ENCODE measurements at regions of chr2 and their contacts with region 1.

Region 1: DNA sequence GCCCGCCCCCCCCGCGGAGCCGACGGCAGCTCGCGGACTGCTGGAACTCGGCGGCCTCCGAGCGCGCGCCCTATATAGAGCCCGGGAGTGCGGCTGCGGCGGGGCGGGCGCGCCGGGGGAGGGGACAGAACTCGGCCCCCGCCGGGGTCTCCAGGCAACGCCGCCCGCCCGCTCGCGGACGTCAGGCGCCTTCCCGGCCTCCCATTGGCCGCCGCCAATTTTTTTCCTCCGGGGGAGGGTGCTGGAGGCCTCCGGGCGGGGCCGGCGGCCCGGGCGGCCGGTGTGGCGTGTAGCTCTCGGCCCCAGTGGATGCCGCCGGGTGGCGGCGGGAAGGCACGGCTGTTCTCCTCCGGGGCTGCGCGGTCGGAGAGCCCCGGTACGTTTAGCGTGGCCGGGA is at the start of gene ZFP36L2:
- DNase-seq: peak; percentile 86 to 98 (median 96)

Region 2: DNA sequence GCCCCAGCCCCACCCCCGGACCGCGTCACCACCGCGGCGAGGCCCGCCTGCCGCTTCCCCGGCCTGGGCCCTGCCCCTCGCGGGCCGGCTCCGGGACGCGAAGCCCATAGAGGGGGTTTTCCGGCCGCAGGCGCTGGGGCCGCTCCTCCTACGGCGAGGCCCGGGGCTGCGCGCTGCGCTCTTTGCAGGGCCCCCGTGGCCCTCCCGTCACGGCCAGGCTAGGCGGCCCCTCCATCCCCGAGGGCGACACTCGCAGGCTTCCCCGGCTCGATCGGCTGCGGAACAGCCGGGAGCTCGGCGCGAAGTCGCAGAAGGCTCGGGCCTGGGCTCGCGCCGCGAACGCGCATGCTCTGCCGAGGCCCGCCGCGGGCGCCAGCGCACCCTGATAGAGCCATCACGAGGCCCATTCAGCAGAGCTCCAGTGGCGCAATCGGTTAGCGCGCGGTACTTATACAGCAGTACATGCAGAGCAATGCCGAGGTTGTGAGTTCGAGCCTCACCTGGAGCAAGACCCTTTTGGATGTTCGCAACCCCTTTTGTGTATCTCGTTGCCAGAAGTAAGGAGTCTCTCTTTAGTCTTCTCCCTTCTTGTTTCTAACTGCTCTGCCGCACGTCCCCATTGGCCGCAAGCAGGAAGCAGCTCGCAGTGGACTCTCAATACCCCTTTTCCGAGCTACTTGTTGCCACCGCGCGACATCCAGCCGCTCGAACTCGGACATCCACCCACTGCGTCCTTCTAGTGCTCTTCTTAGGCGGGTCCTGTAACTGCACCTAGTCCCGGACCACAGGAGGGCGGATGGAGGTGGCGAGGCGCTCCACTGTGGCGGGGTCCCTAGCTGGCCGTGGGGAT is 416.2 kb before region 1 on chr2:
- intact Hi-C with region 1: loop called (anchors 5 kb)
- DNase-seq: peak; percentile 87 to 98 (median 94)

Region 3: DNA sequence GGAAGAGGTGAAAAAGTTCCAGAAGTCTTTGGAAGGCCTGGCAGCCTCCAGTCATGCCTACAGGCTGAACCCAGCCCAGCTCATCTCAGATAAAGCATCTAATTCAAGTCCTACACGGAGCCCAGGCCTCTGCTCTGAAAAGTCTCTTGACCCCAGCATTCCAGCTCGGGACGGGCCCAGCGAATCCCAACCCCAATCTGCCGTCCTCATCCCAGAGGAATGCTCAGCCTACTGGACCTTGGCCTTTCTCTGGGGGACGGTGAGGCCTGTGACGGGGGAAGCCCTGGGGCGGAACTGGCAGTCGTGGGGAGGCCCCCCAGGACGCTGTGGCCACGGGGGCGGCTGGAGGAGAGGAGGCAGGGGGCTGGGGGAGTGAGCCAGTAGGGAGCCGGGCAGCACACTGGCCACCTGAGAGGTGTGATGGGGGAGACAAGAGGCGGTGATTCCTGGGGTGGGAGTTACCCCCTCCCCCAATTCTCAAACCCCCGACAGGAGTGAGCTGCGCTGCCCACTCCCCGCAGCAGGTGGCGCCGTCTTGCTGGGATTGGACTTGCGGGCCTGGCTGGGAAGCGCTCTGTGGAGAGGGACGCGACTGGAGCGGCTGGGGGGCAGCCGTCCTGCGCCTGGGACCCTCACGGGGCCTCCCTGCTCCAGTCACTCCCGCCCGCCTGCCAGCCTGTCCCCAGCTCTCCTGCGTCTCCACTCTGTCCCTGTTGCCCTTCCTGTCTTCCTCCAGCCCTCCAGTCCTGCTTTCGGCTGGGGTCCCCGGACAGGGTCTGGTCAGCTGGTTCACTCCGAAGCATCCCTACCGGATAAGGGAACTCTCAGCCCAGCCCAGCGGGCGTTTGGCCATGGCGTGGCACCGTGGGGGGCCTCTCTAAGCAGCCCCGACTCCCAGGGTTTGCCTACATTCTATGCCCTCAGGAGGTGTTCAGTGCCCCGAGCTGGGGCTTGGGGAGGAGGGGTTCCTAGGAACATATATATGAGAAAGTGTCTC is 251.5 kb before region 1 on chr2:
- intact Hi-C with region 1: loop called (anchors 5 kb)
- DNase-seq: peak; percentile 67 to 93 (median 84)

Region 4: DNA sequence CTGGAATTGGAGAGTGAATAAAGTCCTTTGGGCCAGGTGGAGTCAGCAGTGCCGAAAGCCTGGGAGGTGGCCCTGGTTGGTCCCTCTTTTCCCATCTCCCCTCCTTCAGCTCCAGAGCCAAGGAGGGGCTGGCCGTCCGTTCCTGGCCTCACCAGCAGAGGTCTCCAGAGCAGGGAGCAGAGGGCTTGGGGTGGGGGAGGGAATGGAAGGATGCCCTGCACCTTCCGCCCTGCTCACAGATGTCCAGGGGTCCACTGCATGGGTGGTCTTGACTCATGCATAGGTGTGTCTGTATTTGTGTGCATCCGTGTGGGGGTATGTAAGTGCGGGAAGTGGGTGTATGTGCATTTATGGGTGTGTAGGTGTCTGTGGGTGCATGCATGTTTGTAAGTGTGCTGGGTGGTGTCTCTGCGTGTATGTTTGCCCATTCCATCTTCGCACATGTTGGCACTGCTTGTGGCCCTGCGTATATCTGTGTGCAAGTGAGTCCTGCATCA is 202.0 kb before region 1 on chr2:
- intact Hi-C with region 1: loop called (anchors 2 kb)
- DNase-seq: peak; percentile 31 to 93 (median 79)

Region 5: GRCh38 chr2:43100883-43101662 is 125.5 kb before region 1 on chr2:
- intact Hi-C with region 1: loop called (anchors 2 kb)
- DNase-seq: peak; percentile 88 to 99 (median 95)

Region 6: DNA sequence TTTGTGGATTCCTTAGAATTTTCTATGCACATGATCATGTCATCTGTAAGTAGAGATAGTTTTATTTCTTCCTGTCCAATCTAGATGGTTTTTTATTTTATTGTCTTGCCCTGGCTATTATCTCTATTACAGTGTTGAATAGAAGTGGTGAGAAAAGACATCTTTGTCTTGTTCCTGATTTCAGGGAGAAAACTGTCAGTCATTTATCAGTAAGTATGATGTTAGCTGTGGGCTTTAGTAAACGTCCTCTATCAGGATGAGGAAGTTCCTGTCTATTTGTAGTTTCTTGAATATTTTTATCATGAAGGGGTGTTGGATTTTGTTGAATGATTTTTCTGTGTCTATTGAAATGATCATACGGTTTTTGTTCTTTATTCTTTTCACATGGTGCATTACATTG is 415.8 kb after region 1 on chr2:
- intact Hi-C with region 1: no loop called
- DNase-seq: no peak